Gastrocnemius medialis (tissue), 4 donors: ENCODE measurements at regions of chr17 and their contacts with region 1.

Region 1: DNA sequence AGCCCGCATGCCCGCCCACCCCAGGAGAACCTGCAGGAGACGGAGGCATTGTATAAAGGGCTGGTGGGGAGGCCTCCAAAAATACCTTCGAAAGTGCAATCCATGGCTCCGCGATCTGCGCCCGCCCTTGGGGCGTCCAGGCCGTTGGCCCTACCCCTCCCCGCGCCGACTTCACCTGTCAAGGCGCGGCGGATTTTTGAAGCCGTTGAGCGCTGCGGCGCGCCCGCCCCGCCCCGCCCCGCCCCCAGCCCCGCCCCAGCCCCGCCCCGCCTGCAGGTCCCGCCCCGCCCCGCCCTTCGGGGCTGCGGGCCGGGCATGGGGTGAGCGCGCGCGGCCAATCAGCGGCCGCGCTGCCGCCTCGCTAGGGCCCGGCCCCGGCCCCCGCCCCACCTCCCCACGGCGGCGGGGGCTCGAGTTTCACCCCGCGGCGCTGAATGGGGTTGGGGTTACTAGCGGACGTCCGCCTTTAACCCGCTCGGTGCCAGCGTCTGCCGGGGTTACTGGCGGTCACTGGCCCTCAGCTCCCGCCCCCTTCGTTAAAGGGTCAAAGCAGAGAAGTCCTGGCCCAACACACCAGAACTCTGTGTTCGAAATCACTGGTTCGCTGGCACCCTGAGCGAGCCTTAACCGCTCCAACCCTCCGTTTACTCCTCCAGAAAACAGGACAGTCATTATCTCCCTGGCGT is 13.2 kb downstream of the SREBF1 start:
- DNase-seq: peak; percentile 79 to 93
- ATAC-seq: peak; percentile 68 to 73
- H3K4me3 ChIP-seq: peak overlapping the region; percentile 57 to 83 (median 64)
- H3K27ac ChIP-seq: peak overlapping the region; percentile 93 to 97 (median 96)
- H3K4me1 ChIP-seq: peaks cover 74 to 86% of the 10 kb centered on the region in 2 donors
- H3K27me3 ChIP-seq: no peaks in the 10 kb centered on the region
- CTCF ChIP-seq: no peak
- POLR2A ChIP-seq: peak; percentile 60 to 91

Region 2: DNA sequence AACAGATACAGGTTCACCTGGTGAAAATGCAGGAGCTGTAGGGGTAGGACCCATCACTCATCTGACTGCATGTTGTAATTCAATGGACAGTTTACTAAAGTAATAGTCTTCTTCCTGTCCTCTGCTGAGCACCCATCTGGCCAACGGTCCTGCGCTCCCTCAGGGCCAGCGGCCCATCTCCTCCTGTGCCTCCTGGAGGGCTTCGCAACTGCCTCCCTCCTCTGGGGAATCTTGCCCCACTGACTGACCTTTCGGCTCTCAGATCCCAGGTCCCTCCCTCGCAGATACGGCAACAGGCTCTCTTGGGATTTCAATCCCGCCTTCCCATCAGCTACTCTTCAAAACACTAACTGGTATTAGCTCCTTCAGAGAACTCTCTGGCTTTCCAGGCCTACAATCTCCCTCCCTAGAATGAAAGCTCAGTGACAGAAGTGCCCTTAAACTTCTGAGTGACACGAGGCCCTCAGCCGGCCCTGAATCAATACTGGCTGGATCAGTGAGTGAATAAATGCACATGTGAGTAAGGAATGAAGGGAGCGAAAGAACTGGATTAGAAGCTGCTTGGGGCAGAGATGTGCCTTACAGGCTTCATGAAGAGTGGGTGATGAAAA is 233.3 kb before region 1 on chr17:
- in situ Hi-C with region 1: no loop called
- intact Hi-C with region 1: no loop called
- DNase-seq: no peak
- ATAC-seq: no peak
- H3K4me3 ChIP-seq: peak overlapping the region in 3 of 4 donors; percentile 75 to 95 (median 91)
- H3K27ac ChIP-seq: peak overlapping the region; percentile 83 to 94 (median 91)
- H3K4me1 ChIP-seq: peaks cover 19 to 22% of the 10 kb centered on the region in 2 donors
- H3K27me3 ChIP-seq: no peaks in the 10 kb centered on the region
- CTCF ChIP-seq: no peak
- POLR2A ChIP-seq: no peak

Region 3: DNA sequence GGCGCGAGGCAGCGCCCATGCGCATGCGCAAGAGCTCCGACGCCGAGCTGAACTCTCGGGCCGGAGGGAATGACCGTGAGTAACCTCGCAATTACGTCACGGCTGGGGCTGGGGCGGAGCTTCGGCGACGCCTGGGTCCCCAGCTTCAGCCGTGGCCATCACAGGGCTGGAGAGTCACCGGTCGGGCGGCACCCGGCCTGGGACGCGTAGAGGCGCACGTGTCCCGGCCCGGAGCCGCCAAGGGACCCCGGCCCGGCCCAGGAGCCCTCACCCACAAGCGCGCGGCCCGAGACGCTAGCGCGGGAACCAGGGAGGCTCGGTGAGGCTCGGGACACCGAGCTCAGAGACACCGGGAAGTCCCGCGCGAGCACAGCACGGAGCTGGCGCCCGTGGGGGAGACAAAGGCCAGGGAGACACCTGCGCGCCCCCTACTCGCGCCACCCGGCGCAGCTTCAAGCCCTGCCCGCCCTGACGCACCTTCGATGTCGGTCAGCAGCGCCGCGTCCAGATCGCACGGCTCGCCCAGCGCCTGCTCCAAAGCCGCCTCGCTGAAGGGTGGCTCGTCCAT is 12.8 kb after region 1 on chr17:
- in situ Hi-C with region 1: no loop called
- intact Hi-C with region 1: loop called (anchors 1 kb)
- DNase-seq: peak; percentile 97 to 98
- ATAC-seq: peak; percentile 74 to 81
- H3K4me3 ChIP-seq: peak overlapping the region; percentile 79 to 89 (median 80)
- H3K27ac ChIP-seq: peak overlapping the region; percentile 97 to 100 (median 99)
- H3K4me1 ChIP-seq: peaks cover 67 to 71% of the 10 kb centered on the region in 2 donors
- H3K27me3 ChIP-seq: no peaks in the 10 kb centered on the region
- CTCF ChIP-seq: no peak
- POLR2A ChIP-seq: peak; percentile 99 to 100

Region 4: DNA sequence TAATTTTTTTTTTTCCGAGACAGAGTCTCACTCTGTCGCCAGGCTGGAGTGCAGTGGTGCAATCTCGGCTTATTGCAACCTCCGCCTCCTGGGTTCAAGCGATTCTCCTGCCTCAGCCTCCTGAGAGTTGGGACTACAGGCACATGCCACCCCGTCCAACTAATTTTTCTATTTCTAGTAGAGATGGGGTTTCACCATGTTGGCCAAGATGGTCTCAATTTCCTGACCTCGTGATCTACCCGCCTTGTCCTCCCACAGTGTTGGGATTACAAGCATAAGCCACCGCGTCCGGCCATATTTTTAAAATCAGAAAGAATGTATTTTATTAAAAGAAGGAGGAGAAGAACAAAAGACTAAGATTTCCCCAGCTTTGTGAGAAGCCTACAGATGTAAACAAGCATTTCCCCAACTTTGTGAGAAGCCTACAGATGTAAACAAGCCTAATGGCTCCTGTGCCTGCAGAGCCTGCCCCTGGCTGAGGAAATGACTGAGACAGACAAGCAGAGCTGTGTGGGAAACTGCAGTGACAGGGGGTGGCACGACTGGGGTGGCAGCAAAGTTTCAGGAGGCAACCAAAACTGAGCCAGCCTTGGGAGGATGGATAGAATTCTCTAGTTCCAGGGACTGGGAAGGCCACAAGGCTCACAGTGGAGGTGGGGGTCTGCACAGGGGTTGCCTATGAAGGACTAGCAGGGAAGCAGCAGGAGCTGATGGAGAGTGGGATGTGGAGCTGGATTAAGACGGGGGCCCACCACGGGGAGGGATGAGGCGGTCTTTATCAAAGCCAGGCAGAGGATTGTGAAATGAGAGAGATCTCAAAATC is 468.4 kb after region 1 on chr17:
- in situ Hi-C with region 1: no loop called
- intact Hi-C with region 1: no loop called
- DNase-seq: peak in 1 of 2 donors; percentile 35
- ATAC-seq: peak; percentile 78
- H3K4me3 ChIP-seq: no peak overlapping the region
- H3K27ac ChIP-seq: peak overlapping the region; percentile 57 to 75 (median 66)
- H3K4me1 ChIP-seq: peaks cover 5 to 10% of the 10 kb centered on the region in 2 donors
- H3K27me3 ChIP-seq: no peaks in the 10 kb centered on the region
- CTCF ChIP-seq: no peak
- POLR2A ChIP-seq: no peak